ENCODE measurements at regions of chr3 and their contacts with region 1.

Region 1: DNA sequence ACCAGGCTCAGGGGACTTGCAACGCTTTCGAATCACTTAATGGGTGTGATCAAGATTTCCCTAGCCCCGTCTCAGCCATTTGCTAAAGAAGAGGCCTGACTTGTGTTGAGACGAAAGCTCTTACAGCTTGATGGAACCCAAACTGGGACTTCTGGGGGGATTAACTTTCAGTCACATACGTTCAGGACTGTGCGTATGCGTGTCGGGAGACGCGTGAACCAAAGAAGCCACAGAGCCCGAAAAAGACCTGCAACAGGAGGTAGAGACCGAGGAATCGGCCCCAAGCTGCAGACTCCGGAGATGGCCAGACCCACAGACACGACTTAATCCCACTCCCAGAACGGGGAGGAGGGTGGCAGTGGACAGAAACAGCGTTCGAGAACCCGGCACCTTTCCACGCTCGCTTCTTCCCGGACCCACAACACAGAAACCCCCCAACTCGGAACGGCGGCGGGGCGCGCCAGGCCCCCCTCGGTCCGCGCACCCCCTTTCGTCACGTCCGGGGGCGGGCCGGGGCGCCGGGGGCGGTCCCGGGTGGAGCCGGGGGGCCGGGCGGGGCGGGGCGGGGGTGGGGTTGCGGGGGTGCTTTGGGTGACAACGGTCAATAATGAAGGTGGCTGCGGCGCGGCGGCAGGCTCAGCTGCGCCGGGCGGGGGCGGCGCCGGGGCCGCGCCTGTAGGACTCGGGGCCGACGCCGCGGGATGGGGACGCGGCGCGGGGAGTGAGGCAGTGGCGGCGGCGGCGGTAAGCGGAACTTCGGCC is at the start of gene ATP11B:
- DNase-seq: peak; percentile 70
- H3K4me3 Mint-ChIP-seq: peak within 1 kb of the TSS; percentile 99
- H3K27ac Mint-ChIP-seq: peak within 1 kb of the TSS; percentile 97
- H3K4me1 Mint-ChIP-seq: peaks cover 25% of the 10 kb centered on the region
- H3K27me3 Mint-ChIP-seq: no peaks in the 10 kb centered on the region
- total RNA-seq, gene ATP11B: 86.6 to 92.3 TPM

Region 2: DNA sequence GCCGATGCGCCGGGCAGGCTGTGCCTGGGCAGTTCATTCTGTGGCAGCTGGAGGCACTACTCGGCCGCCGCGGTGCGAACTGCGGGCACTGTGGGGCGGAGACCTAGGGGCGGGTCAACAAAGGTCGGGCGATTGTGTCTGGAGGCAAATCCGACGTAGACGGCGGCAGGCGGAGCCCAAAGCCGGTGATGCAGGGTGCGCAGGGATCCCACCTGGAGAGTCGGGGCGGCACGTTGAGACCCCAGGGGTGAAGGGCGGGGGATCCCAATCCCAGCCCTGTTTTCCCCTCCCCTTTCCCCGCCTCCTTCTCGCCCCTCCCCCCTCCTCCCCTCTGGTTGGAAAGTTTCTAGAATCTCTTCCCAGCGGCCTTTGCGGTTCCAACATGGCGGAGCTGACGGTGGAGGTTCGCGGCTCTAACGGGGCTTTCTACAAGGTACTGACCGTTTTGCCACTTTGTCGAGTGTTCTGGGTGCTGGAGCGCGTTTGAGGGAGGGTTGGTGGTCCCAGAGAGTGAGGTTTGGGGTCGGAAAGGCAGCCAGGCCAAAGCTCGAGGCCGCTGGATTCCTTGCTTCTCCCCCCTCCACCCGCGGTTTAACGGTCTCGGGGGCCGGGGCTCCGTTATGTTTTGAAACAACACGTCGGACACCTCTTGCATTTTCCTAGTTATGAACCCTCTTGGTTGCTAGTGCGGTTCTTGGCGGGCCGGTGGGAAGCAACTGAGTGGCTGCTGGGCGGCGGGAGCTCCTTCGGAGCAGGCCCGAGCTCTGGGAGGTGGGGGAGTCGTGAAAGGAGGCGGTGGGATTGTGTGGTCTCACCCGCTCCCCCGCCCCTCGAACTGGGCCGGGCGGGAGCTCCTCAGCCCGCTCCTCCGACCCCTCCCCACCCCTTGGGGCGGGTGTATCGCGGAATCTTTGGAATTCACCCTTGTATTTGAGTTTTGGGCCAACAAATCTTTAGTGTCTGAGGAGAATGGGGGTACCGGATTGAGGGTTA is 1880.5 kb before region 1 on chr3 and contains the start of gene FXR1:
- CTCF ChIA-PET with region 1: no interaction called
- intact Hi-C with region 1: loop called (anchors 2 kb)
- DNase-seq: peak; percentile 96
- H3K4me3 Mint-ChIP-seq: peak within 1 kb of the TSS; percentile 93
- H3K27ac Mint-ChIP-seq: peak within 1 kb of the TSS; percentile 98
- H3K4me1 Mint-ChIP-seq: peaks cover 57% of the 10 kb centered on the region
- H3K27me3 Mint-ChIP-seq: no peaks in the 10 kb centered on the region
- total RNA-seq, gene FXR1: 184 to 194 TPM

Region 3: DNA sequence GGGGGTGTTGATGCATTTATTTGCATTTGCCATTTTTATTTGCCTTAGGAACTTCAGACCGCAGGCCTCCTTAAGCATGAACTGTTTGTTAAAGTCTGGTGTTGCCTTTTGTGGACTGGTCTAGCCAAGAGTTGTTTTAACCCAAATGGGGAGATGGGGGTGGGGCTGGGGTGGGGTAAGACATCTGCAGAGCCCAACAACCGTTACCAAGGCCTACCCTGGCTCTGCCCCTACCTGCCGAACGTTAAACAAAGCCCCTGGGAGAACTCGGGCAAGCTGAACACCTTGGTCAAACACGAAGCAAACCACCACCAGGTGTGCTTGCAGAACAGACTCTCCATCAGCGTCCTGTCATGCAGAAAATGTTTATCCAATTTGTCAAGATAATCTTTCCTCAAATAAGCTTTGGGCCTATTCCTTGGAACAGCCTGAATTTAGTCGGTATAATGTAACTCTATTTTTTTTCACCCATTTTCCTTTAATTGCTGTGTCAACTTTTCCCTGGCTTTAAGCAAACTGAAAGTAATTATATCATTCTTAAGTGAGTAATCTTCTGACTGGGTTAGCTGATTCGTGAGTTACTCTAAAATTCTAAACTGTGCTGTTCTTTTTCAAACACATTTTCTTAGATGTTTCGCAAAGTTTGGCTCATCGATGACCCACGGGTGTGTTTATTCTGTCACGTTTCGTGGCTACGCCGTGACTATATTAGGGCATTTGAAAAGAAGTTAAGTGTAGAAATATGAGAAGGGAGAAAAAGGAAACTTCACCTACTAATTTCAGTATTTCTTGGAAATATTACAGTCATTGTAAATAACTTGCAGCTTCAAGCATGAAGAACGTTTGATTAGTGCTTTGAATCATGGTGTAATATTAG is 953.8 kb before region 1 on chr3:
- CTCF ChIA-PET with region 1: no interaction called
- intact Hi-C with region 1: no loop called
- DNase-seq: no peak
- H3K4me3 Mint-ChIP-seq: no peak overlapping the region
- H3K27ac Mint-ChIP-seq: no peak overlapping the region
- H3K4me1 Mint-ChIP-seq: no peaks in the 10 kb centered on the region
- H3K27me3 Mint-ChIP-seq: peaks cover 5% of the 10 kb centered on the region

Region 4: GRCh38 chr3:182739619-182740018 is 53.5 kb before region 1 on chr3:
- CTCF ChIA-PET with region 1: no interaction called
- intact Hi-C with region 1: loop called (anchors 2 kb)
- DNase-seq: no peak
- H3K4me3 Mint-ChIP-seq: no peak overlapping the region
- H3K27ac Mint-ChIP-seq: no peak overlapping the region
- H3K4me1 Mint-ChIP-seq: no peaks in the 10 kb centered on the region
- H3K27me3 Mint-ChIP-seq: peaks cover 7% of the 10 kb centered on the region

Region 5: GRCh38 chr3:182967218-182968204 is 174.4 kb after region 1 on chr3:
- CTCF ChIA-PET with region 1: interaction called, 7 read pairs
- intact Hi-C with region 1: loop called (anchors 2 kb)
- DNase-seq: peak; percentile 41
- H3K4me3 Mint-ChIP-seq: no peak overlapping the region
- H3K27ac Mint-ChIP-seq: peak overlapping the region; percentile 85
- H3K4me1 Mint-ChIP-seq: peaks cover 59% of the 10 kb centered on the region
- H3K27me3 Mint-ChIP-seq: no peaks in the 10 kb centered on the region

Region 6: GRCh38 chr3:183210839-183211341 is 417.8 kb after region 1 on chr3:
- CTCF ChIA-PET with region 1: no interaction called
- intact Hi-C with region 1: loop called (anchors 5 kb)
- DNase-seq: peak; percentile 73
- H3K4me3 Mint-ChIP-seq: no peak overlapping the region
- H3K27ac Mint-ChIP-seq: peak overlapping the region; percentile 85
- H3K4me1 Mint-ChIP-seq: peaks cover 63% of the 10 kb centered on the region
- H3K27me3 Mint-ChIP-seq: no peaks in the 10 kb centered on the region

Region 7: DNA sequence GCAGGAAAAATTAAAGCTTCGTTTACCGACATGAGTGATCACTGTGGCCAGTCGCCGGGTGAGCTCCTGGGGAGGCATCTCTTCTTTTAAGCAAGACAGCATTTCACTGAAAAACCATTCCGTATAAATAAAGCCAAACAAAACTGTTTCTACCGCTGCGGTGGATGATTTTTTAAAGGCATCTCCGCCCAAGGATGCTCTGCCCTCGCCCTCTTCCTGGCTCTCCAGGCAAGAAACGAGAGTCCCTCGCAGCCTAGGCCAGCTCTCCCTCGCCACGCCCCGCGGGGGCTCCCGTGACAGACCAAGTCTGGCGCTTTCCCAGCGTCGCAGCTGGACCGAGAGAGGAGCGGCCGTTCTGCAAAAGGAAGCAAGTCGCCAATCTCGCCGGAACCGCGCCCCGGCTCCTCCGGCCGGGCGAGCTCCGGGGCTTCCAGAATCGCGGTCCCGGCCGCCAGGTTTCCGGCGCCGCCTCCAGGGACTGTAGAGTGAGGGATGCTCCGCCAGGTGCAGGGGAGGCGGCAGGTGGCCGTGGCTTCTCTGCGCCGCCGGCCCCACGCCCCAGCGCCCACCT is 634.9 kb after region 1 on chr3:
- CTCF ChIA-PET with region 1: no interaction called
- intact Hi-C with region 1: loop called (anchors 5 kb)
- DNase-seq: peak; percentile 40
- H3K4me3 Mint-ChIP-seq: peak overlapping the region; percentile 79
- H3K27ac Mint-ChIP-seq: no peak overlapping the region
- H3K4me1 Mint-ChIP-seq: peaks cover 27% of the 10 kb centered on the region
- H3K27me3 Mint-ChIP-seq: peaks cover 14% of the 10 kb centered on the region

Measured in activated naive CD4-positive, alpha-beta T cell treated with anti-CD3 and anti-CD28 coated beads for 36 hours (primary cell).